ENCODE measurements at regions of chr18 and their contacts with region 1.

Region 1: GRCh38 chr18:53864770-53865169 is 359.7 kb downstream of the MBD2 start:
- DNase-seq: no peak
- ATAC-seq: no peak
- H3K4me3 ChIP-seq: no peak overlapping the region
- H3K4me3 Mint-ChIP-seq: no peak overlapping the region
- H3K27ac ChIP-seq: no peak overlapping the region
- H3K27ac Mint-ChIP-seq: no peak overlapping the region
- H3K4me1 ChIP-seq: no peaks in the 10 kb centered on the region
- H3K4me1 Mint-ChIP-seq: no peaks in the 10 kb centered on the region
- H3K27me3 ChIP-seq: no peaks in the 10 kb centered on the region
- H3K27me3 Mint-ChIP-seq: peaks cover 0 to 5% (median 0%) of the 10 kb centered on the region in 5 donors

Region 2: GRCh38 chr18:53920312-53921075 is 55.7 kb after region 1 on chr18:
- CTCF ChIA-PET with region 1: no interaction called
- POLR2A ChIA-PET with region 1: no interaction called
- intact Hi-C with region 1: loop called in 1 of 2 experiments (anchors 10 kb)
- DNase-seq: no peak
- ATAC-seq: no peak
- H3K4me3 ChIP-seq: no peak overlapping the region
- H3K4me3 Mint-ChIP-seq: no peak overlapping the region
- H3K27ac ChIP-seq: no peak overlapping the region
- H3K27ac Mint-ChIP-seq: no peak overlapping the region
- H3K4me1 ChIP-seq: no peaks in the 10 kb centered on the region
- H3K4me1 Mint-ChIP-seq: no peaks in the 10 kb centered on the region
- H3K27me3 ChIP-seq: no peaks in the 10 kb centered on the region
- H3K27me3 Mint-ChIP-seq: peaks cover 0 to 12% (median 0%) of the 10 kb centered on the region in 5 donors